ENCODE measurements at regions of chr10 and their contacts with region 1.

Region 1: GRCh38 chr10:130686689-130687300 is 550.6 kb downstream of the GLRX3 start:
- DNase-seq: no peak
- H3K4me3 ChIP-seq: no peak overlapping the region
- H3K27ac ChIP-seq: no peak overlapping the region
- H3K4me1 ChIP-seq: no peaks in the 10 kb centered on the region
- H3K27me3 ChIP-seq: no peaks in the 10 kb centered on the region
- CTCF ChIP-seq: peak in 1 of 2 donors; percentile 20

Region 2: DNA sequence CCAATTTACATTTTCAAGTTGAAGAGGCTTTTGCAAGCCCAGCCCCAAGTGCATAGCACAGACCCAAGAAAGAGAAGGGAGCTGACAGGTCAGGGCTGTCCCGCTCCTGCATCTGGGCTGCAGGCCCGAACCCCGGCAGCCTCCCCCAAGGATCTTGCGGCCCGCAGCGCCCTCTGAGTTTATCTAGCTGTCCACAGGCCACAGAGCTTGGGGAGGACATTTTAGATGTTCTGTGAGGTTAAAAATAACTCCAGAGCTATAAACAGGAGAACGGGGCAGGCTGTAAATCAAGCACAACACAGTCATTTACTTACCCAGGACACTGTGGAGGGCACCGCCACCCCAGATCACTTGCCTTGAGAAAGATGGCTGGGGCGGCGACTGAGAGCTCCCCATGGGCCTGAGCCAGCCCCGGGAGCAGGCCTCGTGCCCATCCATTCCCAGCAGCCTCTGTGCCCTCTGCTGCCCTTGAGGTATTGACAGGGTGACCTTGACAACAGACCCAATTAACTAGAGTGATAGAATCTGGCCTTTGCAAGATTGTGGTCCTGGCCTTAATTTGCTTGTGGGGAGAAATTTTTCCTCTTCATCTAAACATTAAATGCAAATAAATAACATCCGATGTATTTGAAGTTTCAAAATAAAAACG is 61.7 kb after region 1 on chr10:
- CTCF ChIA-PET with region 1: no interaction called
- dilution Hi-C with region 1: no loop called
- in situ Hi-C with region 1: no loop called
- intact Hi-C with region 1: no loop called
- DNase-seq: no peak
- H3K4me3 ChIP-seq: no peak overlapping the region
- H3K27ac ChIP-seq: no peak overlapping the region
- H3K4me1 ChIP-seq: no peaks in the 10 kb centered on the region
- H3K27me3 ChIP-seq: no peaks in the 10 kb centered on the region
- CTCF ChIP-seq: no peak

Region 3: GRCh38 chr10:130769146-130770017 is 82.6 kb after region 1 on chr10:
- CTCF ChIA-PET with region 1: no interaction called
- dilution Hi-C with region 1: loop called (anchors 5 kb)
- in situ Hi-C with region 1: no loop called
- intact Hi-C with region 1: no loop called
- DNase-seq: no peak
- H3K4me3 ChIP-seq: no peak overlapping the region
- H3K27ac ChIP-seq: no peak overlapping the region
- H3K4me1 ChIP-seq: no peaks in the 10 kb centered on the region
- H3K27me3 ChIP-seq: no peaks in the 10 kb centered on the region
- CTCF ChIP-seq: no peak

Region 4: DNA sequence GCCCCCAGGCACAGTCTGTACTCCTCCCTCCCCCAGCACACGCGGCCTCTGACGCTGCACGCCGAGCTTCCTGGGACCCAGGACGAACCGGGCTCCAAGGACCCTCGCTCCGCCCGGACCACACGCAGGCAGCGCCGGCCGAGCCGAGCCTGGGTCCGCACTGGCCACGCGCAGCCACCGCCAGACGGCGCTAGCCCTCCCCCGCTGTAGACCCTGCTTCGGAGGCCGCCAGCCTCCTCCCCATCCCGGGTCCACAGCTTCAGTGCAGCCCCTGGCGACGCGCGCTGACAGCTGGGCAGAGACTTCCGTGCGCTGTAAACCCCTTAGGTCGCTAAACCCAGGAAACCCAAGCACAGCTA is 625.7 kb after region 1 on chr10:
- CTCF ChIA-PET with region 1: no interaction called
- dilution Hi-C with region 1: no loop called
- in situ Hi-C with region 1: no loop called
- intact Hi-C with region 1: loop called (anchors 5 kb)
- DNase-seq: no peak
- H3K4me3 ChIP-seq: no peak overlapping the region
- H3K27ac ChIP-seq: no peak overlapping the region
- H3K4me1 ChIP-seq: no peaks in the 10 kb centered on the region
- H3K27me3 ChIP-seq: peaks cover 4% of the 10 kb centered on the region
- CTCF ChIP-seq: no peak

Measured in mammary epithelial cell (primary cell).